ENCODE measurements at regions of chr19 and their contacts with region 1.

Region 1: GRCh38 chr19:5913739-5914357 is at the start of gene CAPS:
- DNase-seq: peak in 1 of 2 donors; percentile 59
- ATAC-seq: peak; percentile 45 to 77 (median 70)
- H3K4me3 ChIP-seq: no peak within 1 kb of the TSS
- H3K27ac ChIP-seq: peak within 1 kb of the TSS in 6 of 10 donors; percentile 19 to 54 (median 32)
- H3K4me1 ChIP-seq: peaks cover 4 to 32% (median 22%) of the 10 kb centered on the region in 9 donors
- H3K27me3 ChIP-seq: no peaks in the 10 kb centered on the region
- CTCF ChIP-seq: no peak
- total RNA-seq, gene CAPS: 1.3 to 4.2 (median 2.8) TPM

Region 2: GRCh38 chr19:5947435-5947834 is 33.6 kb after region 1 on chr19:
- intact Hi-C with region 1: loop called in 1 of 10 experiments (anchors 5 kb)
- DNase-seq: peak; percentile 46 to 61
- ATAC-seq: peak; percentile 9 to 73 (median 44)
- H3K4me3 ChIP-seq: peak overlapping the region in 4 of 10 donors; percentile 10 to 33 (median 21)
- H3K27ac ChIP-seq: peak overlapping the region in 9 of 10 donors; percentile 15 to 89 (median 59)
- H3K4me1 ChIP-seq: peaks cover 32 to 82% (median 74%) of the 10 kb centered on the region in 9 donors
- H3K27me3 ChIP-seq: no peaks in the 10 kb centered on the region
- CTCF ChIP-seq: no peak

Region 3: DNA sequence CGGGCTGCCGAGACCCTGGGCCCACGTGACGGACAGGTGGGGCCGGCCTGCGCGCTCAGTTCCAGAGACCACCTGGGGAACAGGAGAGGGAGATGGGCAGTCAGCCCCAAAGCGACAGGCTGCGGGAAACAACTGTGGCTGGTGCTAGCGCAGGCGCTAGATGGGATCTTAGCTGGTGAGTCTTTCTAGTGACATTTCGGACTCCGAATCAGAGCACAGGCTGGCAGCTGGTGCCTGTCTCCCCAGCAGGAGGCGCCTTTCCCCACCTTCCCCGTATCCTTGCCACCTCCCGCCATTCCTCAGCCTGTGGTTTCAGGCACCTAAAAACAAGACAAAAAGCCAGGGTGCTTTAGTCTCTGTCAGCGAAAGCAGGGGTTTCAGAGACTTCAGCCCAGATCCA is 83.5 kb after region 1 on chr19:
- intact Hi-C with region 1: no loop called
- DNase-seq: no peak
- ATAC-seq: no peak
- H3K4me3 ChIP-seq: no peak overlapping the region
- H3K27ac ChIP-seq: no peak overlapping the region
- H3K4me1 ChIP-seq: peaks cover 3 to 21% (median 16%) of the 10 kb centered on the region in 9 donors
- H3K27me3 ChIP-seq: no peaks in the 10 kb centered on the region
- CTCF ChIP-seq: no peak

Region 4: GRCh38 chr19:6325614-6326013 is 411.8 kb after region 1 on chr19:
- intact Hi-C with region 1: no loop called
- DNase-seq: no peak
- ATAC-seq: no peak
- H3K4me3 ChIP-seq: no peak overlapping the region
- H3K27ac ChIP-seq: no peak overlapping the region
- H3K4me1 ChIP-seq: no peaks in the 10 kb centered on the region
- H3K27me3 ChIP-seq: peaks cover 0 to 28% (median 8%) of the 10 kb centered on the region in 7 donors
- CTCF ChIP-seq: no peak